RWPE1 (cell line): ENCODE measurements at regions of chr12 and their contacts with region 1.

Region 1: GRCh38 chr12:14272956-14273907 is 92.2 kb upstream of the ATF7IP start:
- DNase-seq: peak; percentile 81
- H3K27ac ChIP-seq: peak overlapping the region; percentile 91
- CTCF ChIP-seq: no peak

Region 2: DNA sequence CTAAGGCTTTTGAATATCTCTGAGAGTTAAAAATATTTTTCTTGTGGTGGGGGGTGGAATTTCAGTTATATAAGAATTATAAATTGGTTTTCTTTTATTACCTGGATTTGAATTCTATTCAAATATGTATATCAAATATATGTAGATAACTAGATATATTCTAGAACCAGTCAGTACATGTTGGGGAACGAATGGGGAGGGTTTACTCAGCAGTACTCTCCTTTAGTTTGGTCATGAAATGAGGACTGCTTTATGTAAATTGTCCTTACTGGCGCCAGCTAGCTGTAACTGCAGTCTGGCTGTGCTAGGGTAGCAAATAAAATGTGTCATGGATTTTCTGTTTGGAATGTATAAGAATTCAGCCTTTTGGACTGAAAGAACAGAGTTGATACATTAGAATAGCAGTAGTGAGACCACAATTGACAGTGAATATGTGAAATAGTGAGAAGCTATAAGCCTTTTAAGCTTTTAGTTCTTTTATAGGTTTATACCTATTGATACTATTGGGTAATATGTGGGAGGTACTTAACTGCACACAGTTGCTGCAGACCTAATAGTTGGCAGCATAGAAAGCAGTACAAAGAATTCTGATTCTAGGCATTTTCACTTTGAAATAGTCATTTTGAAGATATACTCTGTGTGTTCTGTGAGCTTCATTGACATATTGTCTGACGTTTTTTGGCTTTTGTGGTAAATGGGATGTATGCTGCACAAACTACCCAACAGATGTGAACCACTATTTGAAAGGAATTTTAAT is 121.3 kb after region 1 on chr12:
- CTCF ChIA-PET with region 1: no interaction called
- POLR2A ChIA-PET with region 1: interaction called, 10 read pairs
- DNase-seq: peak; percentile 51
- H3K27ac ChIP-seq: no peak overlapping the region
- CTCF ChIP-seq: no peak